ENCODE measurements at regions of chr20 and their contacts with region 1.

Region 1: GRCh38 chr20:2663887-2664719 is at the start of gene IDH3B:
- DNase-seq: peak; percentile 80 to 94 (median 91)
- ATAC-seq: peak; percentile 98 to 99
- H3K4me3 Mint-ChIP-seq: peak within 1 kb of the TSS; percentile 89 to 99 (median 92)
- H3K27ac Mint-ChIP-seq: peak within 1 kb of the TSS; percentile 92 to 100 (median 96)
- H3K4me1 Mint-ChIP-seq: peaks cover 12 to 37% (median 26%) of the 10 kb centered on the region in 4 donors
- H3K27me3 Mint-ChIP-seq: peaks cover 0 to 7% (median 0%) of the 10 kb centered on the region in 5 donors
- polyA plus RNA-seq, gene IDH3B: 95.6 to 126 (median 115) TPM

Region 2: DNA sequence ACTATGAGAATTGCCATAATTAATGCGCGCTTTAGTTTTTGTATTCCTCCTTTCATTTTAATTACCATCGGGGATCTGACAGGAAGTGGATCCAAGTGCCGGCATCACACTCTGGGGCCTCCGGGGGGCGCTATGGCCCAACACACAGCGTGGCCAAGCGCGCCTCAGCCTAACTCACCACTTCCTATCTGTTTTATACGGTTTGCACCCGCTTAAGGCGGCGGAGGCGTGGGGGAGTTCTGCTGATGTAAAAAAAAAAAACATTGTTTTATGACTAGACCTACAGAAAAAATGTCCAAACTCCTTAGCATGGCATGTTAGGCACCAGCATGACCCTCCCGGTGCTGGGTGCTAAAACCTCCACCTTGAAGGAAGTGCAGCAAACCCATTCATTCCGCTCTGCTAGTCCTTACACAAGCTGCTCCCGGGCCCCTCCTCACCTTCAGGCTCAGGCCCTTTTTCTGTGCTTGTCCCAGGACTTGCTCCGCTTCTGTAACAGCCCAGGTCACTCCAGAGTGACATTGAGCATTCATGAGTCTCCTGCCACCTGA is 24.0 kb after region 1 on chr20:
- POLR2A ChIA-PET with region 1: interaction called, 10 read pairs
- DNase-seq: peak; percentile 70 to 89 (median 78)
- ATAC-seq: peak; percentile 78 to 91
- H3K4me3 Mint-ChIP-seq: peak overlapping the region in 9 of 10 donors; percentile 43 to 71 (median 56)
- H3K27ac Mint-ChIP-seq: peak overlapping the region; percentile 9 to 82 (median 54)
- H3K4me1 Mint-ChIP-seq: peaks cover 21 to 33% (median 28%) of the 10 kb centered on the region in 4 donors
- H3K27me3 Mint-ChIP-seq: peaks cover 2 to 25% (median 5%) of the 10 kb centered on the region in 5 donors

Measured in naive thymus-derived CD8-positive, alpha-beta T cell (primary cell).